Spleen (tissue), 13 donors: ENCODE measurements at regions of chr11 and their contacts with region 1.

Region 1: DNA sequence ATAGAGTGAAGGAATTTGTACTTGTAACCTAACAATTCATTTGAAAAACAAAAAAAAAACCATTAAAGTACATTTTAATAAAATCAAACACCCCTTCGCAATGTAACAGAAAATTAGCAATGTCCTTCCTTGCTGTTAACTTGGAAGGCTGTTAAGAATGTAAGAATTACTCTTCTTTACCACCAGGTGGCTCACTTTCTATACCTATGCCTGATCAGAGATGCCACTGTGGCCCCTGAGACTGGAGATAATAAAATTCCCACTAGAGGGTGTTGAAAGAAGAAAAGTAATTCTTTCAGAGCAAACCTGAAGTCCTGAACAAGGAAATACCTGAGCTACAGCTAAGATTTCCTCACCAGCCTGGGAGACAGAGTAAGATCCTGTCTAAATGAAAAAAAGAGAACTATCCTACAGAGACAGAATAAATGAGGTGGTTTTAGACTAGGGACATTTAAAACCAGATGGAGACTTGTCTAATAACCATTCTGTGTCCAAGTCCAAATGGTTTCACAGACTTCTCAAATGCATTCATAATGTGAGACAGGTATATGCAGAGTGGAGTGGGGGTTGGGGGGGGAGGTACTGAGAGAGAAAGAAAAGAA is 1089.3 kb downstream of the FAM181B start:
- DNase-seq: no peak
- H3K4me3 ChIP-seq: no peak overlapping the region
- H3K27ac ChIP-seq: no peak overlapping the region
- H3K4me1 ChIP-seq: no peaks in the 10 kb centered on the region
- H3K27me3 ChIP-seq: peaks cover 0 to 12% (median 0%) of the 10 kb centered on the region in 7 donors
- CTCF ChIP-seq: peak in 9 of 11 experiments; percentile 22 to 69 (median 61)
- POLR2A ChIP-seq: no peak

Region 2: GRCh38 chr11:82229341-82229740 is 585.0 kb after region 1 on chr11:
- intact Hi-C with region 1: loop called (anchors 5 kb)
- DNase-seq: no peak
- H3K4me3 ChIP-seq: no peak overlapping the region
- H3K27ac ChIP-seq: no peak overlapping the region
- H3K4me1 ChIP-seq: no peaks in the 10 kb centered on the region
- H3K27me3 ChIP-seq: no peaks in the 10 kb centered on the region
- CTCF ChIP-seq: peak in 5 of 11 experiments; percentile 5 to 34 (median 20)
- POLR2A ChIP-seq: no peak